ENCODE measurements at regions of chr1 and their contacts with region 1.

Region 1: DNA sequence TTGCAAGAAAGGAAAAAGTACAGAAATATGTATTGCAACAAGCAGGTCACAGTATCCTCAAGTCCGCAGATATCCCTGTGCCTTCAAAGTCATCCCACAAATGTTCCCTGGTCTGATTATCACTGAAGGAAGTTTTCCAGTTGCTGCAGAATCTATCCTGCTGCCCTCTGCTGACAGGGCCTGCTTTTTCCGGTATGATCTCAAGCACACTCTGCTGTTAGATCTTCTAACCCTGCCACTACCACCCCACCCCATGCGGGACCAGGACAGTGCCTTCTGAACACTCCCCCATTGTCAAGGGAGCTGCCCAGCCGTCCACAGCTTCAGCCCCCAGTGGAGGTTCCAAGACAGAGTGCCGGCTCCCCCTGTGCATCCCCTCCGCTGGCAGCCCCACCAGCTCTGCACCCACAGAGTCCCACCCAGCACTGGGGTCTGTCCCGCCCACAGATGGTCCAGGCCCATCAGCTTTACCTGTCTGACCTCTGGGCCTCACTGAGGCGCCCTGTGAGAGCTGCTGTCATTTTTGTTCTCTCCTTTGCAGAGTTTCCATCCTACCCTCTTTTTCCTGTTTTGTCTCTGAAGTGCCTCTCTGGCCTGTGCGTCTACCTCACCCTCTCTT is 27.9 kb downstream of the FAM163A start:
- DNase-seq: peak in 1 of 2 experiments; percentile 8
- H3K4me3 ChIP-seq: no peak overlapping the region
- H3K4me3 Mint-ChIP-seq: no peak overlapping the region
- H3K27ac Mint-ChIP-seq: no peak overlapping the region
- H3K4me1 ChIP-seq: no peaks in the 10 kb centered on the region
- H3K4me1 Mint-ChIP-seq: no peaks in the 10 kb centered on the region
- H3K27me3 ChIP-seq: no peaks in the 10 kb centered on the region
- H3K27me3 Mint-ChIP-seq: no peaks in the 10 kb centered on the region
- CTCF ChIP-seq: no peak

Region 2: DNA sequence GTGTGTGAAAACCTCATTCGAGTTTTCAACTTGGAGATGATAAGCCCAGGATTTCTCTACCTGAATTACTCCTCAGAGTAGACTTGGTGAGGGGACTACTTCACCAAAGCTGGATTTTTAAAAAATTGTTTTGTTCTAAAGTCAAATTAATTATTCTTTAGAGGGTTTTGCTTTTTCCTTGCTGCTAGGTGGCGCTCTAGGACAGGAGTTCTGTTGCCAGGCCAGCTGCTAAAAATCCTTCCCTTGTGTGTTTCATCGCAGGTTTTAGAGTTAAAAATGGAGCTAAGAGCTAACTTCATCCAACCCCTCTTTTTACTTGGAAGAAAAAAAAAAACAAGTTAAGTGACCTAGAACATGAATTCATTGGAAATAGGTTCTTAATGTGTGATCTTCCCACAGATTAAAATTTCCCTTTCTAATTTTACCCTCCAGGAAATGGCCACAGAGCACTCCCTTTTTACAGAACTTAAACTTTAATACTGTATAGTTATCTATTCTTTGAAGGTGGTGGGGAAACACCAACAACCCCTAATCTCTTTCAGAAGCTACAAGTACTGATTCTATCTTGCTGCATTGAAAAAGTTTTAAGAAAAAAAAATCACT is 64.6 kb before region 1 on chr1:
- CTCF ChIA-PET with region 1: no interaction called
- POLR2A ChIA-PET with region 1: no interaction called
- intact Hi-C with region 1: loop called (anchors 1 kb)
- DNase-seq: peak; percentile 47 to 69
- H3K4me3 ChIP-seq: no peak overlapping the region
- H3K4me3 Mint-ChIP-seq: no peak overlapping the region
- H3K27ac Mint-ChIP-seq: no peak overlapping the region
- H3K4me1 ChIP-seq: peaks cover 8% of the 10 kb centered on the region
- H3K4me1 Mint-ChIP-seq: peaks cover 8% of the 10 kb centered on the region
- H3K27me3 ChIP-seq: no peaks in the 10 kb centered on the region
- H3K27me3 Mint-ChIP-seq: peaks cover 14% of the 10 kb centered on the region
- CTCF ChIP-seq: peak; percentile 75 to 80